ENCODE measurements at regions of chr5 and their contacts with region 1.

Region 1: GRCh38 chr5:116068028-116068632 is 16.7 kb upstream of the COMMD10 start:
- DNase-seq: peak in 1 of 2 donors; percentile 84
- H3K4me3 ChIP-seq: no peak overlapping the region
- H3K27ac ChIP-seq: no peak overlapping the region
- H3K4me1 ChIP-seq: no peaks in the 10 kb centered on the region
- H3K27me3 ChIP-seq: peaks cover 0 to 21% (median 0%) of the 10 kb centered on the region in 3 donors
- CTCF ChIP-seq: peak in 5 of 7 experiments; percentile 30 to 89 (median 67)
- EP300 ChIP-seq: no peak
- POLR2A ChIP-seq: no peak

Region 2: DNA sequence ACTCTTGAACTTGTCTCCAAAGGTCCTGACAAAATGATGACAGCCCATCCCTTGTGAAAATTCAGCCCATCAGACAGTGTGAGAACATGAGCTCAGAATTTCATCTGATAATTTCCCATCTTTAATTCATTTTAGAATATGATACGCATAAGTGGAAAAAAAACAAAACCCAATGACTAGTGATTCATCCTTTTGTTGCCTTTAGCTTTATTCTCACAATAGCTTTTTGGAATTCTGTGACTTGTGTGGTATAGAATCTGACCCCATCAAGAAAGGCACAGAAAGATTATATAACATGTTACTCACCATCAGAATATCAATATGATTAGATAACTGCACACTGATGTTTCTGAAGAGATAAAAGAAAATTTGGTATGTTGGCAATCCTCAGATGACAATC is 426.2 kb before region 1 on chr5:
- intact Hi-C with region 1: loop called (anchors 10 kb)
- DNase-seq: no peak
- H3K4me3 ChIP-seq: no peak overlapping the region
- H3K27ac ChIP-seq: no peak overlapping the region
- H3K4me1 ChIP-seq: no peaks in the 10 kb centered on the region
- H3K27me3 ChIP-seq: peaks cover 0 to 13% (median 0%) of the 10 kb centered on the region in 3 donors
- CTCF ChIP-seq: no peak
- EP300 ChIP-seq: no peak
- POLR2A ChIP-seq: no peak

Region 3: GRCh38 chr5:115985802-115986757 is 82.0 kb before region 1 on chr5:
- intact Hi-C with region 1: no loop called
- DNase-seq: peak in 1 of 2 donors; percentile 69
- H3K4me3 ChIP-seq: no peak overlapping the region
- H3K27ac ChIP-seq: no peak overlapping the region
- H3K4me1 ChIP-seq: peaks cover 0 to 13% (median 9%) of the 10 kb centered on the region in 4 donors
- H3K27me3 ChIP-seq: no peaks in the 10 kb centered on the region
- CTCF ChIP-seq: no peak
- EP300 ChIP-seq: no peak
- POLR2A ChIP-seq: no peak

Region 4: GRCh38 chr5:116216246-116216645 is 148.1 kb after region 1 on chr5:
- intact Hi-C with region 1: no loop called
- DNase-seq: no peak
- H3K4me3 ChIP-seq: no peak overlapping the region
- H3K27ac ChIP-seq: no peak overlapping the region
- H3K4me1 ChIP-seq: no peaks in the 10 kb centered on the region
- H3K27me3 ChIP-seq: no peaks in the 10 kb centered on the region
- CTCF ChIP-seq: no peak
- EP300 ChIP-seq: no peak
- POLR2A ChIP-seq: no peak

Region 5: DNA sequence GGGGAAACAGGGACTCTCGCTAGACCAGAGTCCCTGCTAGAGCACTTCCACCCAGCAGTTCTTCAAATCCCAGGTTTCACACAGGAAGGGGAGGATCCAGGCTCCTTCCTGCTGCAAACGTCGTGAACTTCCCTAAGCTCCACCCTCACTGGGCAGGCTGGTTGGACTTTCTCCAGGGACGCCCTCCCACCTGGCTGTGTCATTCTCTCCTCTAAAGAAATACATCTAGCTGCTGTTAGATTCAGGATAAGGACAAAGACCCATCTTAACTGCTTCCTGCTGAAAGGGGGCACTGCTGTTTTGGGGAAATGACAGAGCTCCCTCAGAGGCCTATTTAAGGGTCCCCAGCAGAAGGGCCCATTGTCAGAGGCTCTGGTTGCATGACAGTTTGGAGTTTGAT is 275.8 kb after region 1 on chr5:
- intact Hi-C with region 1: no loop called
- DNase-seq: no peak
- H3K4me3 ChIP-seq: no peak overlapping the region
- H3K27ac ChIP-seq: no peak overlapping the region
- H3K4me1 ChIP-seq: no peaks in the 10 kb centered on the region
- H3K27me3 ChIP-seq: no peaks in the 10 kb centered on the region
- CTCF ChIP-seq: no peak
- EP300 ChIP-seq: no peak
- POLR2A ChIP-seq: no peak

Measured in stomach (tissue), 19 donors.